ENCODE measurements at regions of chr2 and their contacts with region 1.

Region 1: DNA sequence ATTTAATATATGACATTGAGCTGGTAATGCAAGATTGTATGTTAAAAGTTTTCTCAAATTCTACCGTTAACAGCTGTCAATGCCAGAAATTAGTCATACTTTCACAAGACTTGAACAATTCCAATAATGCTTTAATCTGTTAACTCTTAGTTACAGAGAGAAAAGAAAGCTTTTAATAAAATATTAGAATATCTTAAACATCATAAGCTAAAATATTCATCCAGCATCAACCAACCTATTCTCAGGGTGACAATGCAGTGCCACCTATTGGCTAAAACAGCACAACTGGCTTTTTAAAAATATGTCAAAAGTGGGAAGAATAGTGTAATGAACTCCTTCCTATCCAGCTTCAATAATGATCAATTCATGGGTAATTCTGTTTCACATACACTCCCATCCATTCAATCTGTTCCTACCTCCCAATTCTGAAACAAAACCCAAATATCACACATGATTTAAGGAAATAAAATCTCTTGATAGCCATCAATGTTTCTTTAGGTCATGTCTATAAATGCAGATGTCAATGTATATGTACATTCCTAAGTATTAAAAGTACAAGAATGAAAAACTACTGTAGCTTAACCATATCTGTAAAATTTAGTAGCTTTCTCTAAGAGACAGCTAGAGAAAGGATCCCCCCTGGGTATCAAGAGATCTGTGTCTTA is 79.8 kb upstream of the CCDC141 start:
- DNase-seq: peak; percentile 35
- H3K4me3 Mint-ChIP-seq: no peak overlapping the region
- H3K27ac Mint-ChIP-seq: no peak overlapping the region
- H3K4me1 Mint-ChIP-seq: no peaks in the 10 kb centered on the region
- H3K27me3 Mint-ChIP-seq: no peaks in the 10 kb centered on the region

Region 2: GRCh38 chr2:178796079-178796677 is 333.5 kb before region 1 on chr2:
- CTCF ChIA-PET with region 1: interaction called, 5 read pairs
- intact Hi-C with region 1: loop called (anchors 1 kb)
- DNase-seq: no peak
- H3K4me3 Mint-ChIP-seq: no peak overlapping the region
- H3K27ac Mint-ChIP-seq: no peak overlapping the region
- H3K4me1 Mint-ChIP-seq: no peaks in the 10 kb centered on the region
- H3K27me3 Mint-ChIP-seq: no peaks in the 10 kb centered on the region

Region 3: GRCh38 chr2:178914259-178914849 is 215.4 kb before region 1 on chr2:
- CTCF ChIA-PET with region 1: interaction called, 9 read pairs
- intact Hi-C with region 1: loop called (anchors 1 kb)
- DNase-seq: peak; percentile 89
- H3K4me3 Mint-ChIP-seq: no peak overlapping the region
- H3K27ac Mint-ChIP-seq: no peak overlapping the region
- H3K4me1 Mint-ChIP-seq: peaks cover 7% of the 10 kb centered on the region
- H3K27me3 Mint-ChIP-seq: no peaks in the 10 kb centered on the region

Region 4: DNA sequence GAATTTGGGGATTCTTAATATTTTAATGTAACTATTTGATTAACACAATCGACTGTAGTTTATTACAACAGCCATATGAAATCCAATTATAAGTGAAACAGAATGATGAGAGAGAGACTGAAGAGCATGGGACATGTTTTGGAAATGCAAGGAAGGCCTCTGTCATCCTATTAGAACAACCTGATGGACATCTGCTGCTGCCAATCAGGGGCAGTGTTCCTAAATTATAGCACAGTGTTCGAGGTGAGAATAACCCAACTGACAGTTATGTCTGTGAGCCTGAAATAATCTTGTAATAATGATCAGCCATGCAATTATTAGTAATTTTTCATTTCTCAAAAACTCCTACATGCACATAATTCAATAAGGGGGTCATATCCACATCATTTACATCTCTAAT is 153.4 kb before region 1 on chr2:
- CTCF ChIA-PET with region 1: interaction called, 6 read pairs
- intact Hi-C with region 1: loop called (anchors 2 kb)
- DNase-seq: no peak
- H3K4me3 Mint-ChIP-seq: no peak overlapping the region
- H3K27ac Mint-ChIP-seq: no peak overlapping the region
- H3K4me1 Mint-ChIP-seq: peaks cover 2% of the 10 kb centered on the region
- H3K27me3 Mint-ChIP-seq: no peaks in the 10 kb centered on the region